PC-9 (cell line): ENCODE measurements at regions of chr9 and their contacts with region 1.

Region 1: GRCh38 chr9:96654443-96655197 is 497 bp downstream of the PRXL2C start:
- DNase-seq: peak; percentile 50 to 73
- H3K4me3 ChIP-seq: peak overlapping the region; percentile 84
- H3K27ac ChIP-seq: peak overlapping the region; percentile 66
- H3K4me1 ChIP-seq: peaks cover 17% of the 10 kb centered on the region
- H3K27me3 ChIP-seq: no peaks in the 10 kb centered on the region
- CTCF ChIP-seq: no peak

Region 2: GRCh38 chr9:96376891-96377874 is 277.4 kb before region 1 on chr9:
- CTCF ChIA-PET with region 1: no interaction called
- POLR2A ChIA-PET with region 1: no interaction called
- intact Hi-C with region 1: no loop called
- DNase-seq: peak; percentile 46 to 72
- H3K4me3 ChIP-seq: no peak overlapping the region
- H3K27ac ChIP-seq: peak overlapping the region; percentile 42; the same call in 1 of the 2 replicates
- H3K4me1 ChIP-seq: peaks cover 19% of the 10 kb centered on the region
- H3K27me3 ChIP-seq: no peaks in the 10 kb centered on the region
- CTCF ChIP-seq: no peak

Region 3: DNA sequence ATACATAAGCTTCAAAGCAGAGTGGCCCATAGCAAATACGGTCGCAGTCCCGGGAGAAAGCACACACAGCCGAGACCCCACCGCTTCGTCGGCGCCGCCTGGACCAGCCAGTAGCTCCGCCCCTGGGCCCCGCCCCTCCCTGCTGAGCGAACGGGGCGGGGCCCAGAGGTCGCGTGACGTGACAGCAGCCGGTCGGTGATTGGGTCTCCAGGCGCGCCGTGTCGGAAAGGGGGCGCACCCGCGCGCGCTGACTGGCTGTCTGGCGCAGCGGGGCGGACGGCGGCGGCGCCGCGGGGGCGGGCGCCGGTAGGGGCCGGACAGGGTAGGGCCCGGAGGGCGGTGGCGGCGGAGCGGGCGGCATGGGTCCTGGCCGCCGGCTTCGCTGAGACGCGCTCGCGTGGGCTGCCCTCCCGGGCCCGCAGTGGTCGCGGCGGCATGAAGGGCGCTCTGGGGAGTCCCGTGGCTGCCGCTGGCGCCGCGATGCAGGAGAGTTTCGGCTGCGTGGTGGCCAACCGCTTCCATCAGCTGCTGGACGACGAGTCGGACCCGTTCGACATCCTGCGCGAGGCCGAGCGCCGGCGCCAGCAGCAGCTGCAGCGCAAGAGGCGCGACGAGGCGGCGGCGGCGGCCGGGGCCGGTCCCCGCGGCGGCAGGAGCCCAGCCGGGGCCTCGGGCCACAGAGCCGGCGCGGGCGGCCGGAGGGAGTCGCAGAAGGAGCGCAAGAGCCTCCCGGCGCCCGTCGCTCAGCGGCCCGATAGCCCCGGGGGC is 204.6 kb before region 1 on chr9 and contains the start of gene HABP4:
- CTCF ChIA-PET with region 1: interaction called, 5 read pairs
- POLR2A ChIA-PET with region 1: interaction called, 5 read pairs
- intact Hi-C with region 1: loop called (anchors 2 kb)
- DNase-seq: peak; percentile 74 to 97
- H3K4me3 ChIP-seq: peak within 1 kb of the TSS; percentile 65
- H3K27ac ChIP-seq: no peak within 1 kb of the TSS
- H3K4me1 ChIP-seq: peaks cover 9% of the 10 kb centered on the region
- H3K27me3 ChIP-seq: no peaks in the 10 kb centered on the region
- CTCF ChIP-seq: no peak
- total RNA-seq, gene HABP4: 8.1 and 11.0 TPM in 2 replicates

Region 4: DNA sequence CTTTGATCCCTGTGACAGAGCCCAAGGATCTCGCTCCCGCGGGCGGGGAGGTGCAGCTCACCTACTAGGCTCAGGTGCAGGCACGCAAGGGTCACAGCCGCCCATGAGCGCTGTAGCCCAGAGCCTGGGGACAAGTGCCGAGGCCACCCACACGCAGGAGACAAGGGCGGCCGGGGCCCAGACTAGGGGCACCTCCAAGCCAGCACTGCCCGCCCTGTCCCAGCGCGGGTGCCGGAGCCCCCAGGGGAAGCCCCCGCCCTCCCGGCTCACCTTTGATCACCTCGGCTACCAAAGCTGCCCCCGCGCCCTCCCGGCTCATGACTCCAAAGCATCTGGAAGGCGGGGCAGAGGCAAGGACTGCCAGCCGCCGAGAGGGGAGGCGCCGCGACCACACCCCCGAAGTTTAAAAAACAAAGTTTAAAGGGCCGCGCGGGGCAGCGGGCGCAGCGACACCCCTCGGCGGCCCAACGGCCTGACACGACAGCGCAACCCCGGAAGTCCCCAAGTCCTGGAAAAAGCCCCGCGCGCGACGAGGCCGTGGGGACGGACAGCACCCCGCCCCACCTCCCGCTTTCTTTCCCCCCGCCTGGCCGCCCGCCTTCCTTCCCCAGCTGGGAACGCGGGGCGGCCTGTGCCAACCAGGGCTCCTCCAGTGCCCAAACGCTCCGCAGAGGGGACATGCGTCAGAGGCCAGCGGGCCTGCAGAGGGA is 88.0 kb before region 1 on chr9:
- CTCF ChIA-PET with region 1: no interaction called
- POLR2A ChIA-PET with region 1: no interaction called
- intact Hi-C with region 1: loop called (anchors 2 kb)
- DNase-seq: peak; percentile 78 to 91
- H3K4me3 ChIP-seq: peak overlapping the region; percentile 88
- H3K27ac ChIP-seq: peak overlapping the region; percentile 92
- H3K4me1 ChIP-seq: peaks cover 31% of the 10 kb centered on the region
- H3K27me3 ChIP-seq: no peaks in the 10 kb centered on the region
- CTCF ChIP-seq: peak; percentile 61

Region 5: DNA sequence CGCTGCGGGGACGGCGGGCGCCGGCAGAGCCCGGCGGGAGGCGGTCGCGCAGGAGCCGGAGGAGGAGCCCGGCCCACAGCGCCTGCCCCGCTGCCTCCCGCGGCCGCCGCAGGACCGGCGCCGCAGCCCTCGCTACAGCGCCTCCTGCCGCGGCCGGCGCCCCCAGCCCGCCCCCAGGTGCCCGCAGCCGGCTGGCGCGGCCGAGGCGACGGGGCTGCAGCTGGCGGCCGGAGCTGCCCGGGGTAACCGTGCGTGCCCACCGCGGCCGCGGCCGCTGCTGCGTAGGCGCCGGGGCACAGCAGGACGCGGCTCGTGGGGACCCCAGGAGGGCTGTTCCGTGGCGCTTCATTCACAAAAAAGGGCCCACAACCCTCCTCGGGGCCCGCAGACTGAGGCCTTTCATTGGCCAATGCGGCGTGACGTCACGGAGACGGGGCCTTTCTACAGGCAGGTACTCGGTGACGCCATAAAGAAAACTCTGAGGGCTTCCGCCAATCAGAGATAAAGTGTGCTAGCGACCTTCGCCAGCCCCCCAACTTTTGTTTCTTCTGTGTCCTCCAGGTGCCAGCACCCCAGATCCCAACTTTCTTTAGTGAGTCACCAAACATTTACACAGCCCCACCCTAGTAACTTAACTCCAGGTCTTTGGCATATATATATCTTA is 35.0 kb before region 1 on chr9 and contains the start of gene CDC14B:
- CTCF ChIA-PET with region 1: interaction called, 4 read pairs
- POLR2A ChIA-PET with region 1: no interaction called
- intact Hi-C with region 1: loop called (anchors 1 kb)
- DNase-seq: peak; percentile 96 to 98
- H3K4me3 ChIP-seq: peak within 1 kb of the TSS; percentile 88
- H3K27ac ChIP-seq: peak within 1 kb of the TSS; percentile 67
- H3K4me1 ChIP-seq: peaks cover 36% of the 10 kb centered on the region
- H3K27me3 ChIP-seq: no peaks in the 10 kb centered on the region
- CTCF ChIP-seq: no peak
- total RNA-seq, gene CDC14B: 43.3 and 47.2 TPM in 2 replicates

Region 6: GRCh38 chr9:96674914-96675538 is 20.4 kb after region 1 on chr9:
- CTCF ChIA-PET with region 1: no interaction called
- POLR2A ChIA-PET with region 1: interaction called, 11 read pairs
- intact Hi-C with region 1: no loop called
- DNase-seq: peak; percentile 20 to 60
- H3K4me3 ChIP-seq: no peak overlapping the region
- H3K27ac ChIP-seq: 0 out of 2 replicates have a peak overlapping the region, but pooled peaks have one; percentile 0
- H3K4me1 ChIP-seq: peaks cover 12% of the 10 kb centered on the region; the same call in 1 of the 2 replicates
- H3K27me3 ChIP-seq: no peaks in the 10 kb centered on the region
- CTCF ChIP-seq: no peak